ENCODE measurements at regions of chr13 and their contacts with region 1.

Region 1: GRCh38 chr13:33542283-33543088 is 256.9 kb upstream of the STARD13 start:
- DNase-seq: peak; percentile 92 to 97
- H3K4me3 ChIP-seq: peak overlapping the region; percentile 37
- H3K4me1 ChIP-seq: peaks cover 11% of the 10 kb centered on the region
- H3K27me3 ChIP-seq: no peaks in the 10 kb centered on the region

Region 2: DNA sequence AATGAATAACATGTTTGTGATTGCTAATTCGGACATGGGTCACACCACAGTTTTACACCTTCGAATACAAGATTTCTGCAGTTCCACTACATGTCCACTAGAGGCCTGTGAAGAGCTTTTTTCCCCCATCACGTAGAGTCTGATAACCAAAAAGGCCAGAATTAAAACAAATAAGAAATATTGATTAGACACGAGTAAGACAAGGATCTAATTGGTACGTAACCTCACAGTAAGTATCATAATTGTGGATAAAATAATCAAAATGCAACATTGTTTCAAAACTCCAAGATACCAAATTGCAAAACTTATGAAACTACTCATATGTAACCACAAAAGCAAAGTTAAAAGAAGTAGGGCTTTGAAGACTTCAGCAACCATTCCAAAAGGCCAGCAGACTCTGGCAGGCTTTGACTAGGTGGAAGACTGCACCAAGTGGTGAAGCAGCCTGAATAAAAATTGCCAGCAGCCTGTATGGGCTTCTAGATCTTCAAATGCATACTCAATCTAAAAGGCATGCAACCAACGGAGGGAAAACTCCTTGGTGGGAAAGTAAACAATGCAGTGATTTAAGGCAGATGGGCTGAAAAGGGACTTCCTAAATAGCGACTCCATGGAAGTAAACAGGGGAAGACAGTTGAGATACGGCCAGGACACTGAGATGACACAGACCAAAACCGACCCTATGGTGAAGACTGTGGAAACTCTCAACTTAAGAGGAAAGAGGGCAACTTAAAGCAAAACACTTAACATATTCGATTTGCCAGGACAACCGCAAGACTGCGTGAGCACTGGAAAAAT is 313.6 kb before region 1 on chr13:
- in situ Hi-C with region 1: loop called (anchors 25 kb)
- DNase-seq: peak in 1 of 2 experiments; percentile 62
- H3K4me3 ChIP-seq: no peak overlapping the region
- H3K4me1 ChIP-seq: no peaks in the 10 kb centered on the region; the same call in 1 of the 2 replicates
- H3K27me3 ChIP-seq: no peaks in the 10 kb centered on the region

Region 3: DNA sequence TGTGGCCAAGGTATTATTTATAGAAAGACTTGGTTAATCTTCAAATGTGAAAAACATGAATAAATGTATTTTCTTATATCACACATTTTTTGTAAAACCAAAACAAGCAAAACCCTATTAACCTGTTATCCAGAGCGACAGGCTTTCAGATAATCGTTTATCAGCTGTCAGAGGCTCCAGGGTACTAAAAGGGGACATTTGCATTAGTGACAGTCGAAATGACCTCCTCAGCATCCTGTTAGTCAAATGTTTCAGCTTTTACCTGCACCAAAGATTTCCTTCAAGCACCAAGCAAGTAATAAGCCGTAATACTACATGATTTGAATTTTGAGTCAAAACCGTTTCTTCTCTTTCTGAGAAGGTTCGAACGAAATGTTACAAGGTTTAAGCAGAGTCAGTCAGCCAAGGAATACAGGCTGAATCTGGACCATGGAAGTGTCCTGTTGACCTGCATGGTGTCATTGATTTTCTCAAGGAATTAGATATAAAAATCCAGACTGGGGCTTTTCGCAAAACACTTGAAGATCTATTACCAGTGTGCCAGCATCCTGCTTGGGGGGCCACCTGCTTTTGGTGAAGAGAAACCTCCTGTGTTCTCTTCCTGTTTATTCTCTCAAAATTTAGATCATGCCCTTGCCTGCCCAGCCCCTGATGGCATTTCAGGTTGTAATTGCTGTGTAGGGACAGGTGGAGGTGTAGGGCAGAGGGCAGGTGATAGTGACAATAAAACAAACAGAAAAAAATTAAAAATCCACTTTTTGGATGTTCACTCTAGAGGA is 264.2 kb after region 1 on chr13:
- in situ Hi-C with region 1: no loop called
- DNase-seq: no peak
- H3K4me3 ChIP-seq: no peak overlapping the region
- H3K4me1 ChIP-seq: peaks cover 5% of the 10 kb centered on the region
- H3K27me3 ChIP-seq: no peaks in the 10 kb centered on the region

Measured in HAP-1 (cell line).